ENCODE measurements at regions of chr20 and their contacts with region 1.

Region 1: DNA sequence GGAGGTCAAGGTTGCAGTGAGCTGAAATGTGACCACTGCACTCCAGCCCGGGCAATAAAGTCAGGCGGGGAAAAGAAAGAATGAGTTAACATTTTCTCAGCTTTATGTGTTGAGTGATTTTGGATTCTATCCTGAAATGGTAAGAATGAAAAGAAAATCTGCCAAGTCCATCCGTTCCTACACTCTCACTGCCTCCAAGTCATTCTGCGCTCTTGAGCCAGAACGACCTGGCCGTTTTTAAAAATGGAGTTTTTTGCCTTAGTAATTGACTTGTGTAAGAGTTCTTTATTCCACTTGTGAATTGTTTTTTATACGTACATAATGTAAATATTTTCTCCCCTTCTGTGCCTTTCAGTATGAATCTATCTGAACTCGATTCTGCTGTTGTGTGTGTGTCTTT is 28.7 kb downstream of the DNAJC5 start:
- DNase-seq: no peak
- H3K4me3 Mint-ChIP-seq: no peak overlapping the region
- H3K27ac Mint-ChIP-seq: peak overlapping the region; percentile 7
- H3K4me1 Mint-ChIP-seq: no peaks in the 10 kb centered on the region
- H3K27me3 Mint-ChIP-seq: no peaks in the 10 kb centered on the region
- CTCF ChIP-seq: no peak

Region 2: DNA sequence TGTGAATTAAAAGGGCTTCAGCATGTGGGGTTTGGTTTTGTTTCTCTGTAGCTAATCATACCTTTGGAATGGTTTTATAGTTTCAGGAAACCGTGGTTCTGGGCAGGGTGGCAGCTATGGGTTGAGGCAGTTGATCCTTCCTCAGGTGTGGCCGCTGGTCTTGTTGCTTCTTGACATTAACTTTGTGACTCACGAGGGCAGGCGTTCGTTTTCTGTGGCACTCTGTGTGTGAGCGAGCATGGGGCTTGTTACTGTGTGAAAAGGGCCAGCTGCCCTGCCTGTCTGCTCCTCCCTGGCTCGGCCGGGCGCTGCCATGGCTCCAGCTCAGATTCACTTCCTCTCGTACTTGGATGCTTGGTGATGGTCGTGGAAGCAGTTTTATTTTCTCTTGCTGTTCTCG is 12.5 kb before region 1 on chr20:
- CTCF ChIA-PET with region 1: no interaction called
- POLR2A ChIA-PET with region 1: interaction called, 12 read pairs
- intact Hi-C with region 1: no loop called
- DNase-seq: peak; percentile 56
- H3K4me3 Mint-ChIP-seq: peak overlapping the region; percentile 28
- H3K27ac Mint-ChIP-seq: peak overlapping the region; percentile 78
- H3K4me1 Mint-ChIP-seq: peaks cover 28% of the 10 kb centered on the region
- H3K27me3 Mint-ChIP-seq: no peaks in the 10 kb centered on the region
- CTCF ChIP-seq: no peak

Region 3: DNA sequence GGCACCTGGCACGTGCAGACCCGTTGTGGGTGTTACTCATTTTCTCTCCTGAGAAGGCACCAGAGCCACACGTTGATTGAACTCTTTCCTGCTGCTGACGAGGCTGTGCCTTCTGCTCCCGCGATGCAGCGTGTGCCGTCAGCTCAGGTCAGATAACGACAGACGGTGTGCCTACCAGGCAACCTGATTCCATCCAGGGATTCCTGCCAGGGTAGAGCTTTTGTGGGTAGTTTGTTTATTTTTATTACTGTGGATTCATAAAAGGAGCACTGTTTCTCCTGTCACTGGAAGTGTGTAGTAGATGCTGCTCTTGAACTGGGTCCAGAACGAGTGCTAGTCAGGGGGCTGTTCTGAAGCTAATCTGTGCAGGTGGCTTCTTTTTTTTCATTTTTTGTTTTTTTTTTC is 78.0 kb after region 1 on chr20:
- CTCF ChIA-PET with region 1: no interaction called
- POLR2A ChIA-PET with region 1: no interaction called
- intact Hi-C with region 1: no loop called
- DNase-seq: peak; percentile 13
- H3K4me3 Mint-ChIP-seq: no peak overlapping the region
- H3K27ac Mint-ChIP-seq: no peak overlapping the region
- H3K4me1 Mint-ChIP-seq: no peaks in the 10 kb centered on the region
- H3K27me3 Mint-ChIP-seq: no peaks in the 10 kb centered on the region
- CTCF ChIP-seq: no peak